ENCODE measurements at regions of chr20 and their contacts with region 1.

Region 1: GRCh38 chr20:17682103-17682888 is at the start of gene RRBP1:
- DNase-seq: peak; percentile 91 to 99 (median 95)
- ATAC-seq: peak; percentile 90
- H3K4me3 ChIP-seq: peak within 1 kb of the TSS; percentile 76
- H3K4me3 Mint-ChIP-seq: peak within 1 kb of the TSS; percentile 93
- H3K27ac ChIP-seq: peak within 1 kb of the TSS; percentile 53 to 56
- H3K27ac Mint-ChIP-seq: peak within 1 kb of the TSS; percentile 74
- H3K4me1 ChIP-seq: peaks cover 20% of the 10 kb centered on the region
- H3K4me1 Mint-ChIP-seq: peaks cover 26% of the 10 kb centered on the region
- H3K27me3 ChIP-seq: peaks cover 12 to 25% of the 10 kb centered on the region in 2 experiments
- H3K27me3 Mint-ChIP-seq: peaks cover 30% of the 10 kb centered on the region
- CTCF ChIP-seq: peak; percentile 89
- total RNA-seq, gene RRBP1: 26.4 to 27.2 TPM

Region 2: DNA sequence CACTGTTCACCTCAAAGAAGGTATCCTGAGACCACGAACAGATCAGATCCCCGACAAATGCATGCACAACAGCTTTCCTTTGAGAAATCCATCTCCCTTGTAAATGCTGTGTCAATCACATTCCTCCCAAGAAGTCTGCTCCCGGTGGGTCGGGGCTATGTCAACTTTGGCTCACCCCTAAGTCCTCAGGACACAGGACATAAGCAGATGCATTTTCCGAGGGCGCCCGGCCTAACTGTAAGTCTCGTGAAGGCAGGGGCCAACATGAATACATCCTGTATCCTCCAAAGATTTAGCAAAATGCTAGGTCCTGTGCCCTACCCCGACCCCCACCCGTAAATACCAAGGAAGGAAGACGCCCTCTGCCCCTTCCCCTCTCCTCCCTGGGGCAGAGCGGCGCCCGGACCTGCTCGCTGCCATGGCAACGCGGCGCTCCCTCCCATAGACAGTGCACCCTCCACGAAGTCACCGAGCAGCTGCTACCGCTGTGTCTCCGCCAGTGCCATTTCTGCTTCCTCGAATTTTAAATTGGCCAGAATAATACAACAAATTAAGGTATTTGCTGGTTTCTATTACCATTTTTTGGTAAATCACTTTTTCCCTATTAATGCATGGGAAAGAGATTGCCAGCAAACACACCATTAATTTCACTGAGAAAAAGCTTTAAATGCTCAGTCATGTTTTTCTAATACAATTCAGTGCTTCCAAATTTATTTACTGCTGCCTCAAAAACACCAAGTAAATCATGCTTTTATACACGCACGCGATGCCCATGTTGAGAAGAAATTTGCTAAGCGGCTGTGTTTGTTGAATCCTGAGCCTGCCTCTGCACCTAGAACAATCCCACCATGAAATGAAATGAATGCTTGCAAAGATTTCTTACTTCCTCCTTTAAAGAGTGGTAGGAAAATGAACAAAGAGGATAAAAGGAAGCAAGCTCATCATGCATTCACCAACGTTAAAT is 354.8 kb before region 1 on chr20:
- CTCF ChIA-PET with region 1: no interaction called
- POLR2A ChIA-PET with region 1: no interaction called
- intact Hi-C with region 1: no loop called
- DNase-seq: no peak
- ATAC-seq: no peak
- H3K4me3 ChIP-seq: no peak overlapping the region
- H3K4me3 Mint-ChIP-seq: no peak overlapping the region
- H3K27ac ChIP-seq: no peak overlapping the region
- H3K27ac Mint-ChIP-seq: no peak overlapping the region
- H3K4me1 ChIP-seq: no peaks in the 10 kb centered on the region
- H3K4me1 Mint-ChIP-seq: no peaks in the 10 kb centered on the region
- H3K27me3 ChIP-seq: peaks cover 12 to 13% of the 10 kb centered on the region in 2 experiments
- H3K27me3 Mint-ChIP-seq: peaks cover 45% of the 10 kb centered on the region
- CTCF ChIP-seq: no peak

Region 3: DNA sequence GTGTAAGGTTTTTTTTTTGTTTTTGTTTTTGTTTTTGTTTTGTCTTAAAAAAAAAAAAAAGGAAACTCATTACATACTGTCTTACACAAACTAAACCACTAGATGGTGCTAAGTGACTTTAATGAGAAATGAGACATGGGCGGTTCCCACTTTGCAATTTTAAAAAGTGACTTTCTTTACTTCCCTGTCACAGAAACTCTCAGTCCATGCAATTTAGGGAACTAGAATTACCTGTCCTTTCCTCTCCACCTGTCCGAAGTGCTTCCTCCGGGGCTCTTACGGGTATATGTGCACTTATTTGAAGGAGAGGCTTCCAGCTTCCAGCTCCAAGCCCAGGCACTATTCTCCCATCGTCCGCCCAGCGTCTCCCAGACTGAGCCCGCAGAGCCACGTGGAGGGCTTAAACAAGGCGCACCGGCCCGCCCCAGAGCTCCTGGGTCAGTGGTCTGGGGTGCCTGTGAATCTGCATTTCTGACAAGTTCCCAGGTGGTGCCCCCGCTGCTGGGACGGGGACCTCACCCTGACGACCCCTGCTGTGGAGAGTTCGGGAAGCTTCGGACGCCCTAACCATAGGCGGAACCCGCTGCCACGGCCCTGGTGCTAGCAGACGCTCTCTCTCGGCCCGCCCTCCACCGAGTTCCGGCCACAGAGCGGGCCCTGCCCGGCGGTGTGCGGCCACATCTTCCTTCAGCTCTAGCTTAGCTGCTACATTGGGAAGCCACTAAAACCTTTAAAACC is 177.2 kb before region 1 on chr20:
- CTCF ChIA-PET with region 1: interaction called, 11 read pairs
- POLR2A ChIA-PET with region 1: interaction called, 4 read pairs
- intact Hi-C with region 1: loop called (anchors 2 to 10 kb)
- DNase-seq: peak in 13 of 14 experiments; percentile 8 to 80 (median 25)
- ATAC-seq: peak; percentile 80
- H3K4me3 ChIP-seq: peak overlapping the region; percentile 69
- H3K4me3 Mint-ChIP-seq: peak overlapping the region; percentile 93
- H3K27ac ChIP-seq: peak overlapping the region; percentile 4 to 48
- H3K27ac Mint-ChIP-seq: peak overlapping the region; percentile 83
- H3K4me1 ChIP-seq: peaks cover 41% of the 10 kb centered on the region
- H3K4me1 Mint-ChIP-seq: peaks cover 32% of the 10 kb centered on the region
- H3K27me3 ChIP-seq: no peaks in the 10 kb centered on the region
- H3K27me3 Mint-ChIP-seq: no peaks in the 10 kb centered on the region
- CTCF ChIP-seq: peak; percentile 69

Region 4: DNA sequence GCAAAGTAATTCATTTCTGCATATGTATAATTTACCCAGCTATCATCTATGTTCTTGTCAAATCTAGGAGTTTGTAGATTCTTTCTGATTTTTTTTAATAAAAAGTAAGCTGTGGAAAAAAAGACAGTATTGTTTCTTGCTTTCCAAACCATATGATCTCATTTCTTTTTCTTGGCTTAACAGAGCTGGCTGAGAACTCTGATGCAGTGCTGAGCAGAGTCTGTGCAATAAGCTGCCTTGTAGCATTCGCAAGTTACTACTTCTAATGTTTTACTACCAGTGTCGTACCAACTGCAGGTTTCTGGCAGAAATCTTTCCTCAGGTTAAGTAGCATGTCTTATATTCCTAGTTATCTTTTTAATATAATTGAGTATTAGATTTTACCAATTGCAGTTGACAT is 15.8 kb before region 1 on chr20:
- CTCF ChIA-PET with region 1: interaction called, 3 read pairs
- POLR2A ChIA-PET with region 1: interaction called, 11 read pairs
- intact Hi-C with region 1: no loop called
- DNase-seq: no peak
- ATAC-seq: no peak
- H3K4me3 ChIP-seq: no peak overlapping the region
- H3K4me3 Mint-ChIP-seq: no peak overlapping the region
- H3K27ac ChIP-seq: no peak overlapping the region
- H3K27ac Mint-ChIP-seq: no peak overlapping the region
- H3K4me1 ChIP-seq: peaks cover 19% of the 10 kb centered on the region
- H3K4me1 Mint-ChIP-seq: peaks cover 26% of the 10 kb centered on the region
- H3K27me3 ChIP-seq: no peaks in the 10 kb centered on the region
- H3K27me3 Mint-ChIP-seq: no peaks in the 10 kb centered on the region
- CTCF ChIP-seq: no peak

Region 5: DNA sequence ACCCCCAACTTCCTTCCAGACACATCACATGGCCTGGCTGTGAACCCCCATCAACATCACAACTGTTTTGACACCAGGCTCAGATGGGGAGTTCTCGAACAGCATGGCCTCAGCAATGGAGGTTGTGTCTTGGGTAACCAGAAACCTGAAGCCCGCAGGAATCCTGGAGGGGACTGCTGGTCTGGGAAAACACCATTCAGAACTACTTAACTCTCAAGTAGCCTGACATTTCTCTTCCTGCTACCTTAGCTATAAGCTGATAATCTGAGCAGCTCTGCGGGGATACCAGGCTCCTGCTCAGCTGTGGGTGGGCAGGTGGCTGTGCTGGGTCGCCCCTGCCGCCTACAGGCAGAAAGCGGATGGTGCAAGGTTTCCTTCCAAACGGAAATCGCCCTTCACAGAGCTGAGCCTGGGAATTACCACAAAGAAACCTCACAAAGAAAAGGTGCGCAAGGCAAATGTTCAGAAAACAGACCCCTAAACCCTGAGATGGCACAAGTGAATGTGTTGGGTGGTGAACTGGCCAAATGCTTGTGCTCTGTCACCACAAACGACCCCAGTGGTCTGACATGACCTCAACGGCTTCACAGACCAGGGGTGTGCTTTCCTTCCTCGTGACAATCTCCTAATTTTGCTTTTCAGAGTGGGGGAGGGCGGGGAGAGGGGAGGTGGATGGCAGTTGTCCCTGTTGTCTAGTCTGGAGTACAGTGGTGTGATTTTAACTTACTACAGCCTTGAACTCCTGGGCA is 256.7 kb after region 1 on chr20:
- CTCF ChIA-PET with region 1: interaction called, 5 read pairs
- POLR2A ChIA-PET with region 1: interaction called, 11 read pairs
- intact Hi-C with region 1: loop called in 1 of 2 experiments (anchors 2 kb)
- DNase-seq: peak; percentile 20 to 76 (median 37)
- ATAC-seq: peak; percentile 97
- H3K4me3 ChIP-seq: no peak overlapping the region
- H3K4me3 Mint-ChIP-seq: no peak overlapping the region
- H3K27ac ChIP-seq: no peak overlapping the region
- H3K27ac Mint-ChIP-seq: peak overlapping the region; percentile 35
- H3K4me1 ChIP-seq: peaks cover 12% of the 10 kb centered on the region
- H3K4me1 Mint-ChIP-seq: peaks cover 11% of the 10 kb centered on the region
- H3K27me3 ChIP-seq: no peaks in the 10 kb centered on the region
- H3K27me3 Mint-ChIP-seq: no peaks in the 10 kb centered on the region
- CTCF ChIP-seq: peak; percentile 78

Region 6: GRCh38 chr20:18137412-18138265 is 455.3 kb after region 1 on chr20 and contains the starts of genes KAT14 and PET117:
- CTCF ChIA-PET with region 1: interaction called, 5 read pairs
- POLR2A ChIA-PET with region 1: interaction called, 9 read pairs
- intact Hi-C with region 1: loop called in 1 of 2 experiments (anchors 5 kb)
- DNase-seq: peak; percentile 83 to 96 (median 91)
- ATAC-seq: peak; percentile 92
- H3K4me3 ChIP-seq: peak within 1 kb of the TSS; percentile 81
- H3K4me3 Mint-ChIP-seq: peak within 1 kb of the TSS; percentile 96
- H3K27ac ChIP-seq: peak within 1 kb of the TSS; percentile 72 to 75
- H3K27ac Mint-ChIP-seq: peak within 1 kb of the TSS; percentile 95
- H3K4me1 ChIP-seq: peaks cover 32% of the 10 kb centered on the region
- H3K4me1 Mint-ChIP-seq: peaks cover 32% of the 10 kb centered on the region
- H3K27me3 ChIP-seq: no peaks in the 10 kb centered on the region
- H3K27me3 Mint-ChIP-seq: no peaks in the 10 kb centered on the region
- CTCF ChIP-seq: no peak
- total RNA-seq, gene KAT14: 8.5 to 9.4 TPM
- total RNA-seq, gene PET117: 13.6 to 14.6 TPM

Region 7: GRCh38 chr20:18566892-18567742 is 884.8 kb after region 1 on chr20 and contains the start of gene SMIM26:
- CTCF ChIA-PET with region 1: no interaction called
- POLR2A ChIA-PET with region 1: interaction called, 3 read pairs
- intact Hi-C with region 1: loop called in 1 of 2 experiments (anchors 10 kb)
- DNase-seq: peak; percentile 90 to 97 (median 94)
- ATAC-seq: peak; percentile 99
- H3K4me3 ChIP-seq: peak within 1 kb of the TSS; percentile 91
- H3K4me3 Mint-ChIP-seq: peak within 1 kb of the TSS; percentile 99
- H3K27ac ChIP-seq: peak within 1 kb of the TSS; percentile 82 to 94
- H3K27ac Mint-ChIP-seq: peak within 1 kb of the TSS; percentile 100
- H3K4me1 ChIP-seq: peaks cover 20% of the 10 kb centered on the region
- H3K4me1 Mint-ChIP-seq: peaks cover 28% of the 10 kb centered on the region
- H3K27me3 ChIP-seq: no peaks in the 10 kb centered on the region
- H3K27me3 Mint-ChIP-seq: no peaks in the 10 kb centered on the region
- CTCF ChIP-seq: no peak
- total RNA-seq, gene SMIM26: 78.7 to 79.8 TPM

Measured in CD4-positive, alpha-beta T cell (primary cell).